ENCODE measurements at regions of chr7 and their contacts with region 1.

Region 1: GRCh38 chr7:131170440-131171105 is 157.1 kb upstream of the MKLN1 start:
- DNase-seq: no peak
- H3K4me3 ChIP-seq: no peak overlapping the region
- H3K27ac ChIP-seq: no peak overlapping the region
- H3K4me1 ChIP-seq: no peaks in the 10 kb centered on the region
- H3K27me3 ChIP-seq: no peaks in the 10 kb centered on the region
- CTCF ChIP-seq: no peak

Region 2: DNA sequence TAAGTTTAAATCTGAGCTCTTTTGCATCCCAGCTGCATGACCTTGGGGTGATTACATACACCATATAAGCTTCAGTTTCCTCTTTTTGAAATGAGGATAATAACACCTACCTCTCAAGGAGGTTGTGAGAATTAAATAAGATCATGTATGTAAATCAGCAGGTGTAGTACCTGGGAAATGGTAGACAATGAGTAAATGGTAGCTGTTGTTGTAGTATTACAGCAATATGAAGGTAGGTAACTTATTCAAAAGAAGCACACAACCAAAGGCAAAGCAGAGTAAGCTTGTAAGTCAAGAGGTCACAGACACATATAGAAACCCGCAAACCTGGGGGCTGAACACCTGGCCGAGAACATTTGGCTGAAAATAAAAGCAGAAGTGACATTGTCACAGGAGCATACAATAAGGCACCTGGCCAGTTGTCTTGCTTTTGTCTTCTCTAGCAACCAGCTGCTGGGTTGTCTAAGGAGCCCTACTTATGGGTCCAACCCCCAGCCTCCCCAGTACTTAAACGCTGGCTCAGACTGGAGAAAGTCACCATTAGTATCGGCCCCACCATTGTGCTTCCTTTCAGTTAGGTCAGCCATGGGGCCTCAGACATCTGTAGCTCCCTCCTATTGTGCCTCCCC is 46.5 kb before region 1 on chr7:
- intact Hi-C with region 1: loop called (anchors 10 kb)
- DNase-seq: no peak
- H3K4me3 ChIP-seq: no peak overlapping the region
- H3K27ac ChIP-seq: no peak overlapping the region
- H3K4me1 ChIP-seq: no peaks in the 10 kb centered on the region
- H3K27me3 ChIP-seq: no peaks in the 10 kb centered on the region
- CTCF ChIP-seq: no peak